B cell (primary cell): ENCODE measurements at regions of chr4 and their contacts with region 1.

Region 1: DNA sequence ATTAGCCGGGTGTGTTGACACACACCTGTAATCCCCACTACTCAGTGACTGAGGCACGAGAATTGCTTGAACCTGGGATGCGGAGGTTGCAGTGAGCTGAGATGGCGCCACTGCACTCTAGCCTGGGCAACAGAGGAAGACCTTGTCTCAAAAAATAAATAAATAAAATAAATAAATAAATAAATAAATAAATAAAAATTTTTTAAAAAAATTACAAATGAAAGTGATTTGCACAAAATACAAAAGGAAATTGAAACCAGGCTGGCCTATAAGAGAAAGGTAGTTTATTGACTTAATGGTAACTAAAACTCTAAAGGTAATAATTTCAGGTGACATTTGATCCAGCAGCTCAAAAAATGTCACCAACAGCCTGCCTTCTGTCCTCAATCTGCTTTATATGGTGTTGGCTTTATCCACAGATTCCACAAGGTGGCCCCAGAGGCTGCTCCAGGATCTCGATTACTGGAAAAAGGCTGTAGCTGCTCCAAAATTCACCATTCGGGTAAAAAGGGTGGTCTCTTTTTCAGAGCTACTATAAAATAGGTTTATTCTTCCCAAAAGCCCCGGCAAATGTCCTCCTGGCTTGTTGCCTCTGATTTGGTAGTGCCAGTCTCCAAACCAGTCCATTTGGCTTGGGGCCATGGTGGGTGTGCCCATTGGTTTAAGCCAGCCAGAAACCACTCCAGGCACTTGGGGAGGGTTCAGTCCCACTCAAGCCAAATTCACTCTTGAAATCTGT is 61.4 kb upstream of the TRIM2 start:
- DNase-seq: peak; percentile 56
- ATAC-seq: no peak
- H3K4me3 ChIP-seq: no peak overlapping the region
- H3K4me3 Mint-ChIP-seq: no peak overlapping the region
- H3K27ac ChIP-seq: no peak overlapping the region
- H3K27ac Mint-ChIP-seq: no peak overlapping the region
- H3K4me1 ChIP-seq: peaks cover 18% of the 10 kb centered on the region in 2 donors
- H3K4me1 Mint-ChIP-seq: peaks cover 10% of the 10 kb centered on the region
- H3K27me3 ChIP-seq: peaks cover 0 to 5% (median 2%) of the 10 kb centered on the region in 4 experiments
- H3K27me3 Mint-ChIP-seq: peaks cover 10% of the 10 kb centered on the region
- CTCF ChIP-seq: peak; percentile 49

Region 2: DNA sequence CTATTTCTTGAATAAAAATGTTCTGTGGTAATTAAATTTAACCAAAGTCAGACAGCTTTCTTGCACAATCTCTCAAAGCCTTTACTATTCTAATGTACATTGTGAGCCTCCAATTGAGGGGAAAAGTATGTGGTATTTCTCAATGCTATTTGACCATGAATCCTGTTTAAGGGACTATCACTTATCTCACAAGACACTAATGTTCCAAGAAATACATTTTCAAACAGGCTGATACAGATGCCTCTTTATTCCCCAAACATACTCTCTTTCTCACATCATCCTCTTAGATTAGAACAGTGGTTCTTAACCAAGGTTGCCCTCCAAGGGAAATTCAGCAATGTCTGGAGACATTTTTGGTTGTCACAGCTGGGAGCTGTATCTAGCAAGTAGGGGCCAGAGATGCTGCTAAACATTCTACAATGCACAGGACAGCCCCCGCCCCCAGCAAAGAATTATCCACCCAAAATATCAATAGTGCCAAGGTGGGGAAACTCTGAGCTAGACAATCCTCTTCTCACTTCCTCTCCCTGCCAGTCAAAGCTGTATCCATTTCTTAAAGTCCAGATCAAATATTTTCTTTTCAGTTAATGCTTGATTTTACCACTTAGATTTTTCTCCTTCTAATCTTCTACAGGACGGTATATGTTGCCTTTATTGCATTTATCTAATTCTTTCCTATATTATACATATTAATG is 67.8 kb before region 1 on chr4:
- CTCF ChIA-PET with region 1: no interaction called
- POLR2A ChIA-PET with region 1: no interaction called
- intact Hi-C with region 1: no loop called
- DNase-seq: no peak
- ATAC-seq: no peak
- H3K4me3 ChIP-seq: no peak overlapping the region
- H3K4me3 Mint-ChIP-seq: no peak overlapping the region
- H3K27ac ChIP-seq: no peak overlapping the region
- H3K27ac Mint-ChIP-seq: no peak overlapping the region
- H3K4me1 ChIP-seq: no peaks in the 10 kb centered on the region
- H3K4me1 Mint-ChIP-seq: peaks cover 12% of the 10 kb centered on the region
- H3K27me3 ChIP-seq: no peaks in the 10 kb centered on the region
- H3K27me3 Mint-ChIP-seq: no peaks in the 10 kb centered on the region
- CTCF ChIP-seq: no peak

Region 3: DNA sequence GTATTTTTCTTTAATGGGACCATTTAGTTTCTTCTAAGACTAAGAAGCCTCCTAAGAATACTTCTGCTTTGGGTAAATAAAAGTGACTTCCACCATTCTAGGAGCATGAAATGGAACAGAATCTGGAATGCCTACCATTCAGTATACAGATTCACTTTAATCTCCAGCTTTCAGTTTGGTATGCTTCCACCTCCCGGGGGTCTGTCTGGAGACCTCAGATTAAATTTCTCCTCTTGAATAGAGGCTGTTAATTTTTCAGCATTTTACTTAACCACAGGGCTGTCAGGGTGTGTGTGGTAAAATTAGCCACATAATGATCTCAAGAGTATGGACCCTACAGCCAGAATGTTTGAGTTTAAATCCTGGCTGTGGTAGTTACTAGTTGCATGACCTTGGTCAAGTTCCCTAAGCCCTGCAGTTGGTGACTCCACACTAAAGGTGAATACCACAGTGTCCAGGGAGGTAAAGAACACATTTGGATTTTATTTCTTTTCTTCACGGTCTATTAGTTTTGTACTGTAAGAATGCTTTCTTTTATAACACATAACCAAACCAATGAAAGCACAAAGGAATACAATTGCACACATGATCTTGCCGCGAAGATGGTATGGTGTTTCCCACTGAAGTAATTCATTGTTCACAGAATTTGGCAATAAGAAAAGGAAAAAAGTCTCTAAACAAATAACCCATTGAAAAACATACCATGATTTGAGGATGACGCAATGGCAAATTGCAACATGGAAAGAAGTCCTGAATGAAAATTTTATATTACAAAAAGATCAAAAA is 24.0 kb after region 1 on chr4:
- CTCF ChIA-PET with region 1: no interaction called
- POLR2A ChIA-PET with region 1: no interaction called
- intact Hi-C with region 1: no loop called
- DNase-seq: no peak
- ATAC-seq: no peak
- H3K4me3 ChIP-seq: no peak overlapping the region
- H3K4me3 Mint-ChIP-seq: no peak overlapping the region
- H3K27ac ChIP-seq: no peak overlapping the region
- H3K27ac Mint-ChIP-seq: no peak overlapping the region
- H3K4me1 ChIP-seq: no peaks in the 10 kb centered on the region
- H3K4me1 Mint-ChIP-seq: no peaks in the 10 kb centered on the region
- H3K27me3 ChIP-seq: peaks cover 0 to 7% (median 1%) of the 10 kb centered on the region in 4 experiments
- H3K27me3 Mint-ChIP-seq: peaks cover 47% of the 10 kb centered on the region
- CTCF ChIP-seq: no peak

Region 4: DNA sequence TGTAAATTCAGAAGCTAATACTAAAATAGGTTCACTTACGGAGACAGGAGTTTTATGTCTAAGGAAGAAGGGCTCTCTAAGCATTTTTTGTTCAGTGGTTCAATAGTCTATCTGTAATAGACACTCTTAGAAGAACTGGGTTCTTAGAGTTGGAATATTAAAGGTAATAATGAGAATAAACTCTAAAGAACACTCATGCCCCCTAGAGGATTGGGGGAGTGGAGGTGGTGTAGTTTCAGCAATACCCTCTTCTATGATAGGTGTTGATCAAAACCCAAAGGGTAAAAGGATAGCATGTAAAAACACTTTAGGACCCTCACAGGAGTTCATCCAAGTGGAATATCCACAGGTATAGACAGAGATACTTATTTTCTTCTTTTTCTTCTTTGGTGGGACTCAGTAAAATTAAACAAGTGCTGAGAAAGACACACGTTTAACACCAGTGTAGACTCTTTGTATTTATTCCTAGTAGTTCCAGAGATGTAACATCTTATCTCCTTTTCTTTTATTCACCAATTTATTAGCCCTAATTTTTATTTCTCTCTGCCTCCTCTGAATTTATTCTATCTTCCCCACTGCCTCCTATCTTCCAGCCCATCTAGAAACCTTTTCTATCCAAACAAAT is 175.9 kb after region 1 on chr4:
- CTCF ChIA-PET with region 1: interaction called, 5 read pairs
- POLR2A ChIA-PET with region 1: no interaction called
- intact Hi-C with region 1: loop called (anchors 1 kb)
- DNase-seq: peak; percentile 57
- ATAC-seq: no peak
- H3K4me3 ChIP-seq: no peak overlapping the region
- H3K4me3 Mint-ChIP-seq: no peak overlapping the region
- H3K27ac ChIP-seq: no peak overlapping the region
- H3K27ac Mint-ChIP-seq: no peak overlapping the region
- H3K4me1 ChIP-seq: no peaks in the 10 kb centered on the region
- H3K4me1 Mint-ChIP-seq: no peaks in the 10 kb centered on the region
- H3K27me3 ChIP-seq: no peaks in the 10 kb centered on the region
- H3K27me3 Mint-ChIP-seq: no peaks in the 10 kb centered on the region
- CTCF ChIP-seq: peak; percentile 78